ENCODE measurements at regions of chr7 and their contacts with region 1.

Region 1: DNA sequence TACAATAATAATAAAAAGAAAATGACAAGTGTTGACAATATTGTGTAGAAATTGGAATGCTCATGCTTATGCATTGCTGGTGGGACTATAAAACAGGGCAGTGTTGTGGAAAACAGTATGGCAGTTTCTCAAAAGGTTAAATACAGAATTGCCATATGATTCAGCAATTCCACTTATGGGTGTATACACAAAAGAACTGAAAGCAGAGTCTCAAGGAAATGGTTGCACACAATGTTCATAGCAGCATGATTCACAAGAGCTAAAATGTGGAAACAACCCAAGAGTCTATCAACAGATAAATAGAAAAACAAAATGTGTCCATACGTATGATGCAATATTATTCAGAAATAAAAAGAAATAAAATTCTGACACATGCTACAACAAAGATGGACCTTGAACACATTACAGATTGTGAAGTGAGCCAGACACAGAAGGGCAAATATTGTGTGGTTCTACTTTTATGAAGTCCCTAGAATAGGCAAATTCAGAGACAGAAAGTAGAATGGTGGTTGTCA is 64.8 kb upstream of the GRM8 start:
- DNase-seq: no peak
- ATAC-seq: no peak
- H3K4me3 ChIP-seq: no peak overlapping the region
- H3K4me3 Mint-ChIP-seq: no peak overlapping the region
- H3K27ac ChIP-seq: no peak overlapping the region
- H3K27ac Mint-ChIP-seq: no peak overlapping the region
- H3K4me1 ChIP-seq: peaks cover under 1% of the 10 kb centered on the region
- H3K4me1 Mint-ChIP-seq: peaks cover 8% of the 10 kb centered on the region
- H3K27me3 ChIP-seq: no peaks in the 10 kb centered on the region
- H3K27me3 Mint-ChIP-seq: peaks cover 23% of the 10 kb centered on the region
- CTCF ChIP-seq: no peak

Region 2: GRCh38 chr7:127304087-127304486 is 13.4 kb before region 1 on chr7:
- CTCF ChIA-PET with region 1: no interaction called
- POLR2A ChIA-PET with region 1: no interaction called
- intact Hi-C with region 1: no loop called
- DNase-seq: no peak
- ATAC-seq: no peak
- H3K4me3 ChIP-seq: no peak overlapping the region
- H3K4me3 Mint-ChIP-seq: no peak overlapping the region
- H3K27ac ChIP-seq: no peak overlapping the region
- H3K27ac Mint-ChIP-seq: no peak overlapping the region
- H3K4me1 ChIP-seq: no peaks in the 10 kb centered on the region
- H3K4me1 Mint-ChIP-seq: no peaks in the 10 kb centered on the region
- H3K27me3 ChIP-seq: no peaks in the 10 kb centered on the region
- H3K27me3 Mint-ChIP-seq: peaks cover 24% of the 10 kb centered on the region
- CTCF ChIP-seq: no peak

Region 3: GRCh38 chr7:127337581-127337980 is 20.1 kb after region 1 on chr7:
- CTCF ChIA-PET with region 1: no interaction called
- POLR2A ChIA-PET with region 1: no interaction called
- intact Hi-C with region 1: loop called in 1 of 2 experiments (anchors 2 kb)
- DNase-seq: no peak
- ATAC-seq: no peak
- H3K4me3 ChIP-seq: no peak overlapping the region
- H3K4me3 Mint-ChIP-seq: no peak overlapping the region
- H3K27ac ChIP-seq: no peak overlapping the region
- H3K27ac Mint-ChIP-seq: no peak overlapping the region
- H3K4me1 ChIP-seq: no peaks in the 10 kb centered on the region
- H3K4me1 Mint-ChIP-seq: no peaks in the 10 kb centered on the region
- H3K27me3 ChIP-seq: peaks cover 3 to 5% of the 10 kb centered on the region in 2 experiments
- H3K27me3 Mint-ChIP-seq: peaks cover 28% of the 10 kb centered on the region
- CTCF ChIP-seq: no peak

Measured in CD8-positive, alpha-beta T cell (primary cell).